A673 (cell line): ENCODE measurements at regions of chr15 and their contacts with region 1.

Region 1: GRCh38 chr15:78308422-78309032 is 9.1 kb upstream of the SKIC8 start:
- DNase-seq: peak; percentile 81
- H3K4me3 ChIP-seq: no peak overlapping the region
- H3K27ac ChIP-seq: no peak overlapping the region
- H3K4me1 ChIP-seq: no peaks in the 10 kb centered on the region
- H3K27me3 ChIP-seq: no peaks in the 10 kb centered on the region
- CTCF ChIP-seq: peak; percentile 96

Region 2: DNA sequence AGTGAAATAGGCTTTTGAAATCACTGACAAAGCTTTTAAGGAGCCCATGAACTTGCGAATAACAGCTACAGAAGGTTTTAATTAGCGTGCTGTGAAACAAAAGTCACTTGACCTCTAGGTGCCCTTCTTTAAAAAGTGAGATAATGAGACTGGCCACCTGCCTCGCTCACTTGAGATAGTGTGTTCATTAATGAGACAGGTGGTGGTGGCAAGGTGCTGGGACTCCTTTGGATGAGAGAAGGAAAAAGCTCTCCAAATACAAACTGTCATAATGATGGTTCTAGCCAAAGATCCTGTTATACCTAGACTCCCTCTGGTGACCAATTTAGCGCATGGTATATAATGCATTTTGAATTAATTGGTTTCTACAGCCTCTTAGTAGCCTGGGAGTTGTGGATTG is 106.8 kb after region 1 on chr15:
- CTCF ChIA-PET with region 1: interaction called, 18 read pairs
- POLR2A ChIA-PET with region 1: no interaction called
- intact Hi-C with region 1: no loop called
- DNase-seq: peak; percentile 59
- H3K4me3 ChIP-seq: no peak overlapping the region
- H3K27ac ChIP-seq: no peak overlapping the region
- H3K4me1 ChIP-seq: no peaks in the 10 kb centered on the region
- H3K27me3 ChIP-seq: no peaks in the 10 kb centered on the region
- CTCF ChIP-seq: peak; percentile 57

Region 3: DNA sequence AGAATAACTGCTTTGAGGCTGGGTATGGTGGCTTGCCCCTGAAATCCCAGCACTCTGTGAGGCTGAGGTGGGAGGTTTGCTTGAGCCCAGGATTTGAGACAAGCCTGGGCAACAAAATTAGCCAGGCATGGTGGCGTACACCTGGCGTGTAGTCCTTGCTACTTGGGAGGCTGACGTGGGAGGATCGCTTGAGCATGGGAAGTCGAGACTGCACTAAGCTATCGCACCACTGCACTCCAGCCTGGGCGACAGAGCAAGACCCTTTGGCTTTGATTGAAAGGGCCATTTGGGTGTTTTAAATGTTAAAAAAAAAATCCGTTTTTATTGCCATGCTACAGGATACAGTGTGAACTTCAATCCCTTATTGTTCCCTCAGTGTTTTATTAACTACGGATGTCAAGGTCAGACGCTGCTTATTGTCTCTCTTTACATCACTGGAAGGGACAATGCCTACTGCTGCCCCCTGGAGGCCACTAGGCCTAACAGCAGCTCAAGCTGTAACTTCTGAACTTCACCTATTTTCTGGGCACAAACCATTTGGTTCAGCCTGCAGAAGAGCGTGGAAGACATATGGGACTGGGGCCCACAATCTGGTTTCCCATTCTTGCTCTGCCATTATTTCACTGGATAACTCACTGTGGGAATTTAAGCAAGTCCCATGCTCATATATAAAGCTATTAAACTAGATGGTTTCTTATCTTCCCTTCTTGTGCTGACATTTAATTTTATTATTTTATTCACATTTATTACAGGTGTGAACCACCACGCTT is 114.2 kb after region 1 on chr15:
- CTCF ChIA-PET with region 1: interaction called, 17 read pairs
- POLR2A ChIA-PET with region 1: no interaction called
- intact Hi-C with region 1: loop called (anchors 1 kb)
- DNase-seq: peak; percentile 66
- H3K4me3 ChIP-seq: no peak overlapping the region
- H3K27ac ChIP-seq: no peak overlapping the region
- H3K4me1 ChIP-seq: no peaks in the 10 kb centered on the region
- H3K27me3 ChIP-seq: no peaks in the 10 kb centered on the region
- CTCF ChIP-seq: peak; percentile 94

Region 4: GRCh38 chr15:78481917-78482316 is 173.4 kb after region 1 on chr15:
- CTCF ChIA-PET with region 1: no interaction called
- POLR2A ChIA-PET with region 1: no interaction called
- intact Hi-C with region 1: loop called (anchors 2 kb)
- DNase-seq: no peak
- H3K4me3 ChIP-seq: no peak overlapping the region
- H3K27ac ChIP-seq: no peak overlapping the region
- H3K4me1 ChIP-seq: no peaks in the 10 kb centered on the region
- H3K27me3 ChIP-seq: no peaks in the 10 kb centered on the region
- CTCF ChIP-seq: no peak

Region 5: GRCh38 chr15:78565097-78565951 is 256.8 kb after region 1 on chr15 and contains the start of gene CHRNA5:
- CTCF ChIA-PET with region 1: no interaction called
- POLR2A ChIA-PET with region 1: no interaction called
- intact Hi-C with region 1: loop called (anchors 10 kb)
- DNase-seq: peak; percentile 94
- H3K4me3 ChIP-seq: peak within 1 kb of the TSS; percentile 68
- H3K27ac ChIP-seq: peak within 1 kb of the TSS; percentile 51
- H3K4me1 ChIP-seq: peaks cover 12% of the 10 kb centered on the region
- H3K27me3 ChIP-seq: no peaks in the 10 kb centered on the region
- CTCF ChIP-seq: no peak
- total RNA-seq, gene CHRNA5: 18.9 and 19.1 TPM in 2 replicates

Region 6: DNA sequence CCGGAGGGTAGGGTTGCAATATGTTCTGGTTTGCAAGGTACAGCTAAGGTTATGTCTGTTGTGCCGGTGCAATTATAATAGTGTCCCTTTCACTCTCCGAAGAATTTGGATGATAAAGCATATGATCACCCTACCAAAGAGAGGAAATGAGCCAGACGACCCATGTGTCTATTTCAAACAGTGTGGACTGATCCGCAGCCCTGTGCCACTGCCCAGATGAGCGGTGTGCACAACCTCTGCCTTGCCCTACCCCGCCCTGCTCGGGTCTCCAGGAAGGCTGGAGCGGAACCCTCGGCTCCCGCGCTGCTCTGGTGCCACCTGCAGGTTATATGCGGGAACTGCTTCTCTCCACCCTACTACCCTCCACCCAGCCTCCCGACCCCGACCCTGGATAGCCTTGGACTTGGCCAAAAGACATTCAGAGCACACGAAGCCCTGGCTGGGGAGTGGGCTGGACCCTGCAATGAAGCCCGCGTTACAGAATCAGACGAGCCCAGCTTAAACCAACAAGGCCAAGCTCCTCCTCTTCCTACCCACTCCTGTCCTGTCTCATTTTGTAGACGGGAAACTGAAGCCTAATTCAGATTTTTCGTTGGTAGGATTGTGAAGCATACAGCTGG is 400.8 kb after region 1 on chr15:
- CTCF ChIA-PET with region 1: no interaction called
- POLR2A ChIA-PET with region 1: no interaction called
- intact Hi-C with region 1: loop called (anchors 5 kb)
- DNase-seq: peak; percentile 63
- H3K4me3 ChIP-seq: no peak overlapping the region
- H3K27ac ChIP-seq: no peak overlapping the region
- H3K4me1 ChIP-seq: no peaks in the 10 kb centered on the region
- H3K27me3 ChIP-seq: peaks cover 61% of the 10 kb centered on the region
- CTCF ChIP-seq: peak; percentile 89